SK-N-SH (cell line): ENCODE measurements at regions of chr7 and their contacts with region 1.

Region 1: DNA sequence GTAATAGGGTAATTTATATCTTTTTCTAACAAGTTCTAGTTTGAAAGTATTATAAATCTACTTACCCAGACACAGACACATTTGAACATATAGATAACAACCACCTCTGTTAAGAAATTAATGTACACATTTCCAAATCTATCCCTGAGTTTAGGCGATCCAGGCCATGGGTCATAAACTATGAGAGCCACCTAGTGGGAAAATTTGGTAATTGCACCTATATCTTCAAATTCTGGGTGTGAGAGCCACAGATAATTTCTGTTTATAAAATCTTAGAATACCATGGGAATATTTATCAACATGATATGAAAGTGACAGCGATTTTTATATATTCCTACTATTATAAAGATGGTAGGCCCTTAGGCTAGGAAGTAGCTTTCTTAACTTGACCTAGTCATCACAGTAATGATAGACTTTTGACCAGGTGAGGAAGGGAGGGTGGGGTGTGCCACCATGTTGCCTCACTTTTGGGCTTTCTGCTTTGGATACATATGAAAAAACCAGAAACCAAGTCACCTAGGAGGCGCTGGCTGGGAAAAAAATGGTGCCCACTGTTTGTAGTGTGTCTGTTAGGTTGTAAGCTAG is 8.0 kb upstream of the EPHA1 start:
- DNase-seq: peak; percentile 82
- H3K4me3 ChIP-seq: no peak overlapping the region
- H3K27ac ChIP-seq: peak overlapping the region in 1 of 2 experiments; percentile 76; a peak in 2 of 4 replicates
- H3K4me1 ChIP-seq: peaks cover 0 to 12% of the 10 kb centered on the region in 2 experiments; a peak in 2 of 4 replicates
- H3K27me3 ChIP-seq: no peaks in the 10 kb centered on the region
- CTCF ChIP-seq: peak; percentile 98
- EP300 ChIP-seq: no peak
- RAD21 ChIP-seq: peak; percentile 90

Region 2: GRCh38 chr7:142927085-142927745 is 489.4 kb before region 1 on chr7:
- CTCF ChIA-PET with region 1: no interaction called
- POLR2A ChIA-PET with region 1: no interaction called
- DNase-seq: no peak
- H3K4me3 ChIP-seq: no peak overlapping the region
- H3K27ac ChIP-seq: no peak overlapping the region
- H3K4me1 ChIP-seq: no peaks in the 10 kb centered on the region
- H3K27me3 ChIP-seq: peaks cover 13% of the 10 kb centered on the region; the same call in 1 of the 2 replicates
- CTCF ChIP-seq: no peak
- EP300 ChIP-seq: no peak
- RAD21 ChIP-seq: no peak

Region 3: DNA sequence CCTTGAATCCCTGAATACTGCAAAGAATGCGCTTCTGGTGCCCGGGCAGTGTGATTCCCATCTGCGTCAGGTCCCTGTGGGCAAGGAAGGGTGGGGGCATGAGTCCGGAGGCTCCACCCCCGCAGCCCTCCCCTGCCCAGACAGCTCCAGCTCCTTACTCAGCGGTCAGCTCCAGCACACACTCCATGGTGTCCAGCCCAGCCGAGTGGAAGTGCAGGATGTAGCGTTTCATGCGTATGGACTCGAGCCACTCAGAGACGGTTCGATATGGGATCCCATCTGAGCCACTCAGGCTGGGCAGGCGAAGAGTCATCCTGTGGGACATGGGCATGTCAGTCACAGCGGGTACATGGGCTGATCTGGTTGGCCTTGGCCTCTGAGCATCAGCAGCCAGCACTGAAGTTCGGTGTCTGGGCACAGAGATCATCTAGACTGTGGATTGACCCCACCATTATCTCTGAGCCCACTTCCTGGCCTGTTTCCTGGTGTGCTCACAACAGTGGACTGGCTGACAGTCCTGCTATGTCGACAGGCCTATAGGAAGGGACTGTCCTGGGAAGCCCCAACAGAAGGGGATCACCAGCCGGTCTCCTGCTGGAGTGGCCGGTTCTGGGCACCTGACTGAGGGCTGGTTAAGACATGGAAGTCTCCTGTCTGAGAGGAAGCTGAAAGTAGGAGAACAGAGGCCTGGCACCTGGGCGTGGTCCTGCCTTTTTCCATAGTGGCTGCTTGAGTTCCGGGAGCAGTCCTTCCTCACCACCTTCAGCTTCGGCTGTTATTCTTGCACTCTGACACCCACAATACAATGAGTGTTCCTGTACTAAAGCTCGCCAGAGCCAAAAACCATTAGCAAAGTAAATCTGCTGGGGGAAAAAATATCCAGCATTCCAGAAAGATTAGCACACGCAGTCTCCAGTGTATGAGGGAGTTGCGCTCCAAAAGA is 24.9 kb before region 1 on chr7:
- CTCF ChIA-PET with region 1: interaction called, 43 read pairs
- POLR2A ChIA-PET with region 1: no interaction called
- DNase-seq: no peak
- H3K4me3 ChIP-seq: no peak overlapping the region
- H3K27ac ChIP-seq: peak overlapping the region; percentile 61 to 75
- H3K4me1 ChIP-seq: peaks cover 10 to 38% of the 10 kb centered on the region in 2 experiments; a peak in 3 of 4 replicates
- H3K27me3 ChIP-seq: no peaks in the 10 kb centered on the region
- CTCF ChIP-seq: no peak
- EP300 ChIP-seq: 0 out of 4 replicates have a peak, but pooled peaks of 1 of the 2 experiments have one; percentile 12
- RAD21 ChIP-seq: no peak

Region 4: GRCh38 chr7:143447466-143447865 is 30.8 kb after region 1 on chr7:
- CTCF ChIA-PET with region 1: no interaction called
- POLR2A ChIA-PET with region 1: no interaction called
- DNase-seq: no peak
- H3K4me3 ChIP-seq: no peak overlapping the region
- H3K27ac ChIP-seq: no peak overlapping the region; a peak in 1 of 4 replicates
- H3K4me1 ChIP-seq: peaks cover 0 to 6% of the 10 kb centered on the region in 2 experiments; a peak in 1 of 4 replicates
- H3K27me3 ChIP-seq: no peaks in the 10 kb centered on the region
- CTCF ChIP-seq: no peak
- EP300 ChIP-seq: no peak
- RAD21 ChIP-seq: no peak